ENCODE measurements at regions of chr7 and their contacts with region 1.

Region 1: DNA sequence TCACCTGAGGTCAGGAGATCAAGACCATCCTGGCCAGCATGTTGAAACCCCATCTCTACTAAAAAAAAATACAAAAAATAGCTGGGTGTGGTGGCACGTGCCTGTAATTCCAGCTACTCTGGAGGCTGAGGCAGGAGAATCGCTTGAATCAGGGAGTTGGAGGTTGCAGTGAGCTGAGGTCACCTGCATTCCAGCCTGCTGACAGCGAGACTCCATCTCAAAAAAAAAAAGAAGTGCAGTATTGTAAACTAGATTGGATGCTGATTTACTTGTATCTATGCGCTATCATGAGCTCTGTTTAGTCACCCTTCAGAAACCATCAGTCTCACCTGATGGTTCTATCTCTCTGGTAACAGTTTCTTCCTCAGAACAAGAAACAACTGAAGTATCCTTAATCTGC is 13.8 kb downstream of the ZSCAN21 start:
- DNase-seq: no peak

Region 2: GRCh38 chr7:99975782-99976521 is 87.4 kb before region 1 on chr7 and contains the start of gene AZGP1:
- CTCF ChIA-PET with region 1: interaction called, 11 read pairs
- POLR2A ChIA-PET with region 1: no interaction called
- DNase-seq: no peak